ENCODE measurements at regions of chr9 and their contacts with region 1.

Region 1: DNA sequence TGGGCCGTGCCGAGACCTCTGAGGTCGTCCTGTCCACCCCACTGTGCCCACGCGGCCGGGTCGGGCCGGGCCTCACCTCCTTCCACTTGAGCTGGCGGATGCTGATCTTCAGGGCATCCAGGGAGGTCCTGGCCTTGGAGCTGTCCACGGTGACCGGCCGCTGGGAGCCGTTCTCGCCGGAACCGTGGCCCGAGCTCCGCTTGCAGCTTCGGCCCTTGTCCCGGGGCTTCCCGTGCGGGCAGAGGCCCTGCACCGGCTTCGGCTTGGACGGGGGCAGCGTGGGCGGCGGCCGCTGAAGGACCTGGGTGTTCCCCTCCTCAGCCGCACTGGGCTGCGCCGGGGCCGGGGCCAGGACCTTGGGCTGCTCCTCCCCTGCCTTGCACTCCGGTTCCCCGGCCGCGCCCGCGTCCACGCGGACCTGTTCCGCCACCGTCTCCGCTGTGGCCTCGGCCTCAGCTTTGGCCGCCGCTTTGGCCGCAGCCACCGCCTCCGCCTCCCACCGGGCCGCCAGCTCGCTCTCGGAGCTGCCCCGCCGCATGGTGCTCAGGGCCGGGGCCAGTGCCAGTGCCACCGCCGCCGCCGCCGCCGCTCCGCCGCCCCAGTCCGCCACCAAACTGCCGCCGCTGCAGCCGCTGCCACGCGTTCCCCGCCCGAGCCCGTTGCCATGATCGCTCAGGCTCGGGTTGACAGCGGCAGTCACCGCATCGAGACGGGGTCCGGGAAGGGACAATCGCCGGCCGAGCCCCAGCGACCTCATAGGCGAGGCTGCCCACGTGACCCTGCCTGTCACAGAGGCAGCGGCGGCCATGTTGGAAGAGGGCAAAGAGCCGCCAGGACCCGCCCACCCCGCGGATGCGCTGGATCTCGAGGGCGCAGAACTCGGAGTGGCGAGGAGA is at the start of gene TTLL11:
- DNase-seq: peak; percentile 98 to 99
- ATAC-seq: peak; percentile 90 to 94 (median 92)
- H3K4me3 ChIP-seq: peak within 1 kb of the TSS; percentile 96
- H3K27ac ChIP-seq: peak within 1 kb of the TSS; percentile 94
- H3K4me1 ChIP-seq: peaks cover 41% of the 10 kb centered on the region
- H3K27me3 ChIP-seq: no peaks in the 10 kb centered on the region
- CTCF ChIP-seq: no peak
- total RNA-seq, gene TTLL11: 16.4 to 56.4 (median 48.4) TPM

Region 2: GRCh38 chr9:121498150-121498486 is 594.7 kb before region 1 on chr9:
- intact Hi-C with region 1: no loop called
- DNase-seq: no peak
- ATAC-seq: peak; percentile 74 to 84 (median 81)
- H3K4me3 ChIP-seq: peak overlapping the region; percentile 77
- H3K27ac ChIP-seq: no peak overlapping the region
- H3K4me1 ChIP-seq: peaks cover 16% of the 10 kb centered on the region
- H3K27me3 ChIP-seq: peaks cover 0 to 48% (median 3%) of the 10 kb centered on the region in 3 donors
- CTCF ChIP-seq: peak; percentile 68

Region 3: GRCh38 chr9:121785673-121786541 is 307.0 kb before region 1 on chr9:
- intact Hi-C with region 1: no loop called
- DNase-seq: no peak
- ATAC-seq: peak in 1 of 4 donors; percentile 18
- H3K4me3 ChIP-seq: no peak overlapping the region
- H3K27ac ChIP-seq: no peak overlapping the region
- H3K4me1 ChIP-seq: no peaks in the 10 kb centered on the region
- H3K27me3 ChIP-seq: no peaks in the 10 kb centered on the region
- CTCF ChIP-seq: no peak

Region 4: GRCh38 chr9:122075135-122076030 is 17.5 kb before region 1 on chr9:
- intact Hi-C with region 1: loop called in 1 of 2 experiments (anchors 1 kb)
- DNase-seq: no peak
- ATAC-seq: peak; percentile 79 to 93 (median 87)
- H3K4me3 ChIP-seq: peak overlapping the region; percentile 41
- H3K27ac ChIP-seq: peak overlapping the region; percentile 87
- H3K4me1 ChIP-seq: peaks cover 63% of the 10 kb centered on the region
- H3K27me3 ChIP-seq: no peaks in the 10 kb centered on the region
- CTCF ChIP-seq: no peak

Region 5: GRCh38 chr9:122168356-122168755 is 75.5 kb after region 1 on chr9:
- intact Hi-C with region 1: no loop called
- DNase-seq: no peak
- ATAC-seq: no peak
- H3K4me3 ChIP-seq: no peak overlapping the region
- H3K27ac ChIP-seq: no peak overlapping the region
- H3K4me1 ChIP-seq: no peaks in the 10 kb centered on the region
- H3K27me3 ChIP-seq: peaks cover 0 to 4% (median 0%) of the 10 kb centered on the region in 3 donors
- CTCF ChIP-seq: no peak

Region 6: DNA sequence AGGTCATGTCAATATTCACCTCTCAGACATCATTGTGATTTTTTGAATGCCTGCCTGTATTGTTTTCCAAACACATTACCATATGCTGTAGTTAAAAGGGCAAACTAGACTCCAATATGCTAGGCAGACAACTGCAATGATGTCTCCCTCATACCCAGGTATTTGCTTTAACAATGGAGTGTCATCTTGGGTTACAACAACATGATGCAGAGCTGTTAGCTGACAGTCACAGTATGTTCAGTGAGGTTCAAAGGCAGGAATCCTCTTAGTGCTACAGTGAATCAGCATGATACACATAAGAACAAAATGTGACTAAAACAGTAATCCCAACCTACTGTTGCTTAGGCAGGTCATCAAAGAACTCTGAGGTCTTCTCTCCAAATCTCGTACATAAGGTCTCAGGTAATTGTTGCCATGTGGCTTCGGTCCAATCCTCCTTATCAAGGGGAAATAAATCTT is 360.8 kb after region 1 on chr9:
- intact Hi-C with region 1: loop called in 1 of 2 experiments (anchors 10 kb)
- DNase-seq: no peak
- ATAC-seq: no peak
- H3K4me3 ChIP-seq: no peak overlapping the region
- H3K27ac ChIP-seq: no peak overlapping the region
- H3K4me1 ChIP-seq: no peaks in the 10 kb centered on the region
- H3K27me3 ChIP-seq: no peaks in the 10 kb centered on the region
- CTCF ChIP-seq: no peak

Measured in psoas muscle (tissue), 8 donors.